Common myeloid progenitor, CD34-positive (primary cell): ENCODE measurements at regions of chr10 and their contacts with region 1.

Region 1: GRCh38 chr10:99870123-99870730 is 87.8 kb downstream of the ABCC2 start:
- DNase-seq: peak; percentile 75 to 91 (median 86)
- H3K4me3 ChIP-seq: peak overlapping the region in 4 of 7 experiments; percentile 6 to 66 (median 42)
- H3K27ac ChIP-seq: no peak overlapping the region
- H3K4me1 ChIP-seq: peaks cover 0 to 13% (median 5%) of the 10 kb centered on the region in 4 experiments
- H3K27me3 ChIP-seq: peaks cover 0 to 70% (median 23%) of the 10 kb centered on the region in 5 experiments

Region 2: GRCh38 chr10:99859585-99859984 is 10.6 kb before region 1 on chr10:
- CTCF ChIA-PET with region 1: interaction called, 15 read pairs
- POLR2A ChIA-PET with region 1: interaction called, 7 read pairs
- DNase-seq: peak; percentile 31 to 52 (median 45)
- H3K4me3 ChIP-seq: no peak overlapping the region
- H3K27ac ChIP-seq: no peak overlapping the region
- H3K4me1 ChIP-seq: no peaks in the 10 kb centered on the region
- H3K27me3 ChIP-seq: peaks cover 0 to 21% (median 0%) of the 10 kb centered on the region in 5 experiments

Region 3: DNA sequence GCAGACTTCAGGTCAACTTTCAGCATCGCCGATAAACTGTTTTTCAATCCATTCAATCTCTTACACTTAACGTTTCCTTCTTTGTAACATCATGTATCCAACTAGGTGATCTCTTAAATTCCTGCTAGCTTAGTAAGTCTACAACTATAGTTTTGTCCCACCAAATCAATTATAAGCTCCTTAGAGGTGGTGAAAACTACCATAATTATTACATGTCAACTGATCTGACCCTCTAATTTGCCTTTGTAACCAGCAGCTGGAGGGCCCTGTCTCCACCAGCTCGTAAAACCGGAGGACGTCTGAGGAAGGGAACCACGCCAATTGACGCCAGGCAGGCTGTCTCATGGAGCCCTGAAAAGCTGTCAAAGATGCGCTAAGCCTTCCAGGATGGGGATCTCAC is 25.6 kb after region 1 on chr10:
- CTCF ChIA-PET with region 1: no interaction called
- POLR2A ChIA-PET with region 1: no interaction called
- DNase-seq: no peak
- H3K4me3 ChIP-seq: no peak overlapping the region
- H3K27ac ChIP-seq: no peak overlapping the region
- H3K4me1 ChIP-seq: no peaks in the 10 kb centered on the region
- H3K27me3 ChIP-seq: no peaks in the 10 kb centered on the region